ENCODE measurements at regions of chr12 and their contacts with region 1.

Region 1: DNA sequence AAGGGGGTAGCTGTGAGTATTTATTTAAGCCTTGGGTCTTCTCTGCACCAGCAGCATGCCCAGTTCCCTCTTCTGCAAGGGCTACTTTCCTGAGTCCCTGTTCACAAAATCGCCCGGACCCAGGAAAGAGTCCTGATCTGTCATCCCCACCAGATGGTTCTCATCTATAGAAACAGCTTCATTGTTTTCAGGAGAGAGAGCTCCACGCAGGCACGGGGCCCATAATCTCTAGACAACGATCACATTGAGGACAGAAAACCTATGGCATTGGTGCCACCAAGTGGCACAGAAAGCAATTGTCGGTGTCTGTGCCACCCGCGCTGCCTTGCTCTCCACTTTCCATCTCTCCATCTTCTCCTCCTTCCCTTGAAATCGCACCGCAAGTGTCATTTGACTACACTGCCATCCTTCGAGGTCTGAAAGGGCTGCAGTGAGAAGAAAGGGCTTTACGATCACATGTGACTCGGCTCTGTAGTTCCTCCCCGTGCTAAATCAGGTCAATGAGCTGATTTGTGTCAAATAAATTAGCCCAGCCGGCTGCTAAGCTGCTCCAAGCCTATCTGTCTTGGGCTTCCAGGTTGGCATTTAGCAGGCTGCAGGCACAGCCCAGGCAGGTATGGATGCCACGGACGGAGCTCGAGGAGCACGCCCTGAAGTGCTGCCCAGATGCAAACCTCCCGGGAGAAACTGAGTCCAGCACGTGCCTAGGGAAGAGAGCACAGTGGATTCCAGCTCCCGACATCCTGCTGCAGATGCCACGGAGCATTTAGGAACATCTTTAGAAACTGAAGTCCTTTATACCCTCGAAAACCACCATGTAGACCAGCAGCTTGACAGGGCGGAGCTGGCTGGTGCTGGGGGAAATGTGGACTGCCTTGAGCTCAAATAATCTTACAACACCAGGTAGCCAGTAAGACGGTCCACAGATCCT is 28.8 kb downstream of the SPRING1 start:
- DNase-seq: peak; percentile 73
- ATAC-seq: peak; percentile 81
- H3K4me3 ChIP-seq: peak overlapping the region in 2 of 5 experiments; percentile 3 to 5
- H3K4me3 Mint-ChIP-seq: peak overlapping the region; percentile 54
- H3K27ac ChIP-seq: no peak overlapping the region
- H3K27ac Mint-ChIP-seq: no peak overlapping the region
- H3K4me1 ChIP-seq: peaks cover 20 to 24% of the 10 kb centered on the region in 2 donors
- H3K4me1 Mint-ChIP-seq: peaks cover 30% of the 10 kb centered on the region
- H3K27me3 ChIP-seq: peaks cover 0 to 8% (median 3%) of the 10 kb centered on the region in 4 experiments
- H3K27me3 Mint-ChIP-seq: peaks cover 9% of the 10 kb centered on the region
- CTCF ChIP-seq: peak; percentile 81

Region 2: DNA sequence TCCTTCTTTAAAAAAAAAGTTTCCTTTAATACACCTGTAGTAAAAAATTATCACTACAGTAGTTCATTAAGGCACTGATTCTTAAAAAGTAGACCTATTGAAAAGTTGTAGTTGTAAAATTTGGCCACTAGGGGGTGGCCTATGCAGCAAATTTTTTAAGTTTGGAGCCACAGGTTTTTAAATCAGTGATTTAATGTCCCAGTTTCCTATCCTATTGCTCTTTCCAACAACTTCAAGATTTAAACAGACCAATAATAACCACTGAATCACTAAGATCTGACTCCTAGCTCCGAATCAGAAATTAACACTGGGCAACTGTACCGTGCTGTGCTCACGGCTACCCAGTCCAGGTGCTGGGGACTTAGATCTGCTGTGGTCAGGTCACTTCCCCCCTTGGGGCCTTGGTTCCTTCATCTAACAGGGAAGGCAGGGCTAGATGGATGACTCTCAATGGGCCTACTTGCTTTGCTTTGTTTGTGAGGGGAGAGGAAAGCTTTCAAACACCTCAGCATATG is 710.9 kb before region 1 on chr12:
- CTCF ChIA-PET with region 1: interaction called, 48 read pairs
- POLR2A ChIA-PET with region 1: no interaction called
- intact Hi-C with region 1: loop called (anchors 1 kb)
- DNase-seq: peak; percentile 72
- ATAC-seq: peak; percentile 85
- H3K4me3 ChIP-seq: no peak overlapping the region
- H3K4me3 Mint-ChIP-seq: no peak overlapping the region
- H3K27ac ChIP-seq: peak overlapping the region in 1 of 2 donors; percentile 58
- H3K27ac Mint-ChIP-seq: peak overlapping the region; percentile 1
- H3K4me1 ChIP-seq: peaks cover 6 to 7% of the 10 kb centered on the region in 2 donors
- H3K4me1 Mint-ChIP-seq: peaks cover 6% of the 10 kb centered on the region
- H3K27me3 ChIP-seq: no peaks in the 10 kb centered on the region
- H3K27me3 Mint-ChIP-seq: no peaks in the 10 kb centered on the region
- CTCF ChIP-seq: peak; percentile 97

Region 3: DNA sequence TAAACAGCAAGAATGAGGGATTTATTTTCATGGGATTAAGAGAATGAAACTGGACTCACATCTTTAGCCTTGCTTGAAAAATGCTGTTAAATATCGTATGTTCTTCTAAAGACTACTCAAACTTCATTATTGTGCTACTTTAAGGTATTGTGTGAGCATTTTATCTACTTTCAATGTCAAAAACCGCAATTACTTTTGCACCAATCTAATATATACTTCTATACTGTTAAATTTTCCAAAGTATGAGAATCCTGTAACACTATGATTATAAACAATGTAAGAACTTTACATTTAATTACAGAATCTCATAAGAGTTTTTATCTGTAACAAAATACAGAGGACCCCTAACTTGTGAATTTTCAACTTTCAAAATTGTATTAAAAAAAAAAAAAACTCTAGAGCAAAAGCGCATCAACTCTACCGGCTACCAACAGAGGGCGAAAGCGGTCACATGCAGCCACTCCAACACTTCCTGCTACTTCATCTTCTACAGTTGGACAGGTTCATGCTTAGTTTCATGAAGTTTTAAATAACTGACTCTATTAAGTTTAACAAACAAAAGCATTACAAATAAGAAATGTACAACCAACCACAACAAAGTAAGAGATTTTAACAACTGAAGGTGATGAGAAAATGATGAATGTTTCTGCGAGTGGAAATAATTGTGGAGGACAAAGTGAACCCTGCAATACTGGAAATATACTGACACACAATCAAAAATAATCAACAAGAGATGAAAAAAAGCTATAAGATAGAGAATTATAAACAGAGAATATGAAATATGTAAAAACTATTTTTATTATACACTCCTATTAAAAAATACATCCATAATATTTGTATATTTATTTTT is 642.5 kb before region 1 on chr12:
- CTCF ChIA-PET with region 1: interaction called, 10 read pairs
- POLR2A ChIA-PET with region 1: no interaction called
- intact Hi-C with region 1: loop called (anchors 10 kb)
- DNase-seq: peak; percentile 73
- ATAC-seq: peak; percentile 74
- H3K4me3 ChIP-seq: no peak overlapping the region
- H3K4me3 Mint-ChIP-seq: no peak overlapping the region
- H3K27ac ChIP-seq: no peak overlapping the region
- H3K27ac Mint-ChIP-seq: peak overlapping the region; percentile 21
- H3K4me1 ChIP-seq: peaks cover 8% of the 10 kb centered on the region in 2 donors
- H3K4me1 Mint-ChIP-seq: peaks cover 42% of the 10 kb centered on the region
- H3K27me3 ChIP-seq: no peaks in the 10 kb centered on the region
- H3K27me3 Mint-ChIP-seq: no peaks in the 10 kb centered on the region
- CTCF ChIP-seq: peak; percentile 97

Region 4: GRCh38 chr12:116693286-116694227 is 15.5 kb before region 1 on chr12:
- CTCF ChIA-PET with region 1: interaction called, 15 read pairs
- POLR2A ChIA-PET with region 1: no interaction called
- intact Hi-C with region 1: no loop called
- DNase-seq: peak; percentile 20
- ATAC-seq: no peak
- H3K4me3 ChIP-seq: peak overlapping the region in 4 of 5 experiments; percentile 22 to 68 (median 38)
- H3K4me3 Mint-ChIP-seq: peak overlapping the region; percentile 86
- H3K27ac ChIP-seq: no peak overlapping the region
- H3K27ac Mint-ChIP-seq: no peak overlapping the region
- H3K4me1 ChIP-seq: peaks cover 45% of the 10 kb centered on the region in 2 donors
- H3K4me1 Mint-ChIP-seq: peaks cover 43% of the 10 kb centered on the region
- H3K27me3 ChIP-seq: peaks cover 0 to 43% (median 22%) of the 10 kb centered on the region in 4 experiments
- H3K27me3 Mint-ChIP-seq: peaks cover 41% of the 10 kb centered on the region
- CTCF ChIP-seq: no peak

Region 5: GRCh38 chr12:117119592-117120198 is 410.6 kb after region 1 on chr12:
- CTCF ChIA-PET with region 1: interaction called, 21 read pairs
- POLR2A ChIA-PET with region 1: no interaction called
- intact Hi-C with region 1: no loop called
- DNase-seq: peak; percentile 42
- ATAC-seq: no peak
- H3K4me3 ChIP-seq: no peak overlapping the region
- H3K4me3 Mint-ChIP-seq: no peak overlapping the region
- H3K27ac ChIP-seq: no peak overlapping the region
- H3K27ac Mint-ChIP-seq: no peak overlapping the region
- H3K4me1 ChIP-seq: no peaks in the 10 kb centered on the region
- H3K4me1 Mint-ChIP-seq: no peaks in the 10 kb centered on the region
- H3K27me3 ChIP-seq: no peaks in the 10 kb centered on the region
- H3K27me3 Mint-ChIP-seq: no peaks in the 10 kb centered on the region
- CTCF ChIP-seq: peak; percentile 69